K562 (cell line): ENCODE measurements at regions of chr16 and their contacts with region 1.

Region 1: DNA sequence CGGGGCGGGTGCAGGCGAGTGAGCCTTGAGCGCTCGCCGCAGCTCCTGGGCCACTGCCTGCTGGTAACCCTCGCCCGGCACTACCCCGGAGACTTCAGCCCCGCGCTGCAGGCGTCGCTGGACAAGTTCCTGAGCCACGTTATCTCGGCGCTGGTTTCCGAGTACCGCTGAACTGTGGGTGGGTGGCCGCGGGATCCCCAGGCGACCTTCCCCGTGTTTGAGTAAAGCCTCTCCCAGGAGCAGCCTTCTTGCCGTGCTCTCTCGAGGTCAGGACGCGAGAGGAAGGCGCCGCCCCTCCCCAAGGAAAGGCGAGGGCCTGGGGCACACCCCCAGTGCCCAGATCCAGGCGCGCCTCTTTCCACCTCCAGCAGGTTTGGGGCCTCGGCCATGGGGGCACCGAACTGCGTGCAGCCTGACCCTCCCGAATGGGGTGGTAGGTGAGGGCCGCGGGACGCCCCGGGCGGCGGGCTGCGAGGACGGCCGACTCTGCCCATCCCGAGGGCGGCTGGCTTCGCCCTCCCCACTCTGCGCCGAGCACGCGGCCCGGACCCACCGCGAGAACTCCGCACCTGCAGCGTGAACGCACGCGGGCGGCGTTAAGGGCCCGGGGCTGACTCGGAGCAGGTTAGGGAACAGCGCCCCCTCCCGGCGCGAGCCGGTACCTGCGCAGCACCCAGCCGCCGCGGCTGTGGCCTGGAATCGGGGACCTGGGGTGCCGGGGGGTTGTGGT is 844 bp downstream of the HBQ1 start:
- DNase-seq: peak; percentile 88 to 95 (median 90)
- ATAC-seq: peak; percentile 82
- H3K4me3 ChIP-seq: peak overlapping the region; percentile 61
- H3K27ac ChIP-seq: peak overlapping the region; percentile 83
- H3K4me1 ChIP-seq: peaks cover 17 to 52% of the 10 kb centered on the region in 2 experiments; a peak in 4 of 5 replicates
- H3K27me3 ChIP-seq: no peaks in the 10 kb centered on the region
- CTCF ChIP-seq: peak; percentile 88 to 95 (median 90)
- EP300 ChIP-seq: no peak
- POLR2A ChIP-seq: peak; percentile 70
- RAD21 ChIP-seq: peak; percentile 90 to 95

Region 2: GRCh38 chr16:65671-66137 is 115.4 kb before region 1 on chr16:
- CTCF ChIA-PET with region 1: interaction called, 41 read pairs
- POLR2A ChIA-PET with region 1: interaction called, 8 read pairs
- in situ Hi-C with region 1: no loop called
- intact Hi-C with region 1: no loop called
- DNase-seq: peak; percentile 76 to 89 (median 80)
- ATAC-seq: peak; percentile 94
- H3K4me3 ChIP-seq: no peak overlapping the region
- H3K27ac ChIP-seq: no peak overlapping the region
- H3K4me1 ChIP-seq: peaks cover 0 to 53% of the 10 kb centered on the region in 2 experiments; a peak in 3 of 5 replicates
- H3K27me3 ChIP-seq: no peaks in the 10 kb centered on the region
- CTCF ChIP-seq: peak; percentile 97 to 98 (median 98)
- EP300 ChIP-seq: no peak
- POLR2A ChIP-seq: no peak
- RAD21 ChIP-seq: peak; percentile 99

Region 3: GRCh38 chr16:96935-97381 is 84.1 kb before region 1 on chr16:
- CTCF ChIA-PET with region 1: interaction called, 27 read pairs
- POLR2A ChIA-PET with region 1: interaction called, 7 read pairs
- in situ Hi-C with region 1: no loop called
- intact Hi-C with region 1: no loop called
- DNase-seq: peak; percentile 96 to 97 (median 96)
- ATAC-seq: peak; percentile 98
- H3K4me3 ChIP-seq: no peak overlapping the region
- H3K27ac ChIP-seq: no peak overlapping the region
- H3K4me1 ChIP-seq: peaks cover 8 to 49% of the 10 kb centered on the region in 2 experiments; a peak in 4 of 5 replicates
- H3K27me3 ChIP-seq: no peaks in the 10 kb centered on the region
- CTCF ChIP-seq: peak; percentile 100
- EP300 ChIP-seq: peak; percentile 60
- POLR2A ChIP-seq: 0 out of 2 replicates have a peak, but pooled peaks have one; percentile 28
- RAD21 ChIP-seq: peak; percentile 97

Region 4: DNA sequence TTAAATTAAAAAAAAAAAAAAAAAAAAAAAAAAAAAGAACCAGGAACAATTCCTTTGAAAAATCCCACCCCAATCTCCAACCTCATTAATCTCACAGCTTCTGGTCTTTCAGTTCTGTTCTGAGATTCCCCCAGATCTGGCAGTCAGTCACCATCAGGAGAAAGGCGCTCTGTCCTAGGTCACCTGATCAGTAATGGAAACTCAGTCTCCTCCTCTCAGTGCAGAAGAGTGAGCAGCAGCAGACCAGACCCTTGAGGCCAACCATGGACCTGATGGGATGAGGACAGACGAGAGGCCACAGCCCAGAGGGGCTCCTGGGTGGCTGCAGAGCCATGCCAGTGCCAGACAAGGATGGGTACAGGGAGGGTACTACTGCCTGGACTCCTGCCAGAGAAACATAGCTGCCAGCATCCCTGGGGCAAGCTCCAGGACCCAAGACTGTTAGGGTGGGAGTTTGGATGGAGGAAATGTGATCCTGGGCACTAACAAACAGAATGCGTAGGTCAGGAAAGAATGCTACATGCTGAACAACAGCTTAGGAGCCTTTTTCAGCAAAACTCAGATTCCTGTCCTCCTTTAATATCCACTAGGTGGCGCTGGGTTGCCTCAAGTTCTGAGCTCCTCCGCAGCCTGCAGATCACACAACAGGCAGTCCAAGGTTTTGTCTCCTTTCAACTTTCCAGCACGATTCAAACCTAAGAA is 74.3 kb before region 1 on chr16:
- CTCF ChIA-PET with region 1: interaction called, 42 read pairs
- POLR2A ChIA-PET with region 1: interaction called, 3 read pairs
- in situ Hi-C with region 1: loop called (anchors 5 kb)
- intact Hi-C with region 1: loop called (anchors 2 kb)
- DNase-seq: peak; percentile 55 to 91 (median 66)
- ATAC-seq: peak; percentile 85
- H3K4me3 ChIP-seq: no peak overlapping the region
- H3K27ac ChIP-seq: peak overlapping the region; percentile 23; the same call in 2 of the 3 replicates
- H3K4me1 ChIP-seq: peaks cover 29 to 50% of the 10 kb centered on the region in 2 experiments; a peak in 4 of 5 replicates
- H3K27me3 ChIP-seq: no peaks in the 10 kb centered on the region
- CTCF ChIP-seq: peak; percentile 86 to 94 (median 88)
- EP300 ChIP-seq: no peak
- POLR2A ChIP-seq: no peak
- RAD21 ChIP-seq: peak; percentile 87 to 95

Region 5: GRCh38 chr16:143456-143855 is 37.6 kb before region 1 on chr16:
- CTCF ChIA-PET with region 1: no interaction called
- POLR2A ChIA-PET with region 1: no interaction called
- in situ Hi-C with region 1: no loop called
- intact Hi-C with region 1: loop called (anchors 2 kb)
- DNase-seq: peak in 1 of 4 experiments; percentile 27
- ATAC-seq: peak; percentile 25
- H3K4me3 ChIP-seq: no peak overlapping the region
- H3K27ac ChIP-seq: peak overlapping the region; percentile 81
- H3K4me1 ChIP-seq: peaks cover 38 to 53% of the 10 kb centered on the region in 2 experiments
- H3K27me3 ChIP-seq: no peaks in the 10 kb centered on the region
- CTCF ChIP-seq: no peak
- EP300 ChIP-seq: no peak
- POLR2A ChIP-seq: no peak
- RAD21 ChIP-seq: no peak